CD4-positive, alpha-beta memory T cell (primary cell): ENCODE measurements at regions of chr17 and their contacts with region 1.

Region 1: GRCh38 chr17:82315703-82316358 is 1.6 kb downstream of the CD7 start:
- DNase-seq: peak; percentile 48 to 64 (median 51)
- H3K4me3 ChIP-seq: peak overlapping the region; percentile 51 to 88
- H3K4me3 Mint-ChIP-seq: peak overlapping the region in 7 of 8 donors; percentile 89 to 94 (median 93)
- H3K27ac ChIP-seq: peak overlapping the region; percentile 65
- H3K27ac Mint-ChIP-seq: peak overlapping the region in 6 of 7 donors; percentile 88 to 96 (median 93)
- H3K4me1 ChIP-seq: peaks cover 29% of the 10 kb centered on the region
- H3K4me1 Mint-ChIP-seq: peaks cover 7 to 26% (median 15%) of the 10 kb centered on the region in 4 donors
- H3K27me3 ChIP-seq: no peaks in the 10 kb centered on the region
- H3K27me3 Mint-ChIP-seq: no peaks in the 10 kb centered on the region

Region 2: GRCh38 chr17:82051776-82052637 is 263.8 kb before region 1 on chr17 and contains the starts of genes GPS1 and RFNG:
- CTCF ChIA-PET with region 1: no interaction called
- POLR2A ChIA-PET with region 1: no interaction called
- intact Hi-C with region 1: no loop called
- DNase-seq: peak; percentile 77 to 79 (median 78)
- H3K4me3 ChIP-seq: peak within 1 kb of the TSS; percentile 29 to 69
- H3K4me3 Mint-ChIP-seq: peak within 1 kb of the TSS; percentile 79 to 91 (median 84)
- H3K27ac ChIP-seq: peak within 1 kb of the TSS; percentile 55
- H3K27ac Mint-ChIP-seq: peak within 1 kb of the TSS; percentile 38 to 91 (median 87)
- H3K4me1 ChIP-seq: peaks cover 31% of the 10 kb centered on the region
- H3K4me1 Mint-ChIP-seq: peaks cover 3 to 22% (median 11%) of the 10 kb centered on the region in 4 donors
- H3K27me3 ChIP-seq: no peaks in the 10 kb centered on the region
- H3K27me3 Mint-ChIP-seq: no peaks in the 10 kb centered on the region
- total RNA-seq, gene GPS1: 85.1 to 89.0 TPM
- total RNA-seq, gene RFNG: 37.6 to 44.0 TPM

Region 3: GRCh38 chr17:82193520-82194220 is 122.2 kb before region 1 on chr17:
- CTCF ChIA-PET with region 1: no interaction called
- POLR2A ChIA-PET with region 1: no interaction called
- intact Hi-C with region 1: no loop called
- DNase-seq: no peak
- H3K4me3 ChIP-seq: no peak overlapping the region
- H3K4me3 Mint-ChIP-seq: no peak overlapping the region
- H3K27ac ChIP-seq: no peak overlapping the region
- H3K27ac Mint-ChIP-seq: peak overlapping the region in 1 of 7 donors; percentile 51
- H3K4me1 ChIP-seq: peaks cover 11% of the 10 kb centered on the region
- H3K4me1 Mint-ChIP-seq: peaks cover 8 to 15% (median 11%) of the 10 kb centered on the region in 4 donors
- H3K27me3 ChIP-seq: no peaks in the 10 kb centered on the region
- H3K27me3 Mint-ChIP-seq: no peaks in the 10 kb centered on the region

Region 4: DNA sequence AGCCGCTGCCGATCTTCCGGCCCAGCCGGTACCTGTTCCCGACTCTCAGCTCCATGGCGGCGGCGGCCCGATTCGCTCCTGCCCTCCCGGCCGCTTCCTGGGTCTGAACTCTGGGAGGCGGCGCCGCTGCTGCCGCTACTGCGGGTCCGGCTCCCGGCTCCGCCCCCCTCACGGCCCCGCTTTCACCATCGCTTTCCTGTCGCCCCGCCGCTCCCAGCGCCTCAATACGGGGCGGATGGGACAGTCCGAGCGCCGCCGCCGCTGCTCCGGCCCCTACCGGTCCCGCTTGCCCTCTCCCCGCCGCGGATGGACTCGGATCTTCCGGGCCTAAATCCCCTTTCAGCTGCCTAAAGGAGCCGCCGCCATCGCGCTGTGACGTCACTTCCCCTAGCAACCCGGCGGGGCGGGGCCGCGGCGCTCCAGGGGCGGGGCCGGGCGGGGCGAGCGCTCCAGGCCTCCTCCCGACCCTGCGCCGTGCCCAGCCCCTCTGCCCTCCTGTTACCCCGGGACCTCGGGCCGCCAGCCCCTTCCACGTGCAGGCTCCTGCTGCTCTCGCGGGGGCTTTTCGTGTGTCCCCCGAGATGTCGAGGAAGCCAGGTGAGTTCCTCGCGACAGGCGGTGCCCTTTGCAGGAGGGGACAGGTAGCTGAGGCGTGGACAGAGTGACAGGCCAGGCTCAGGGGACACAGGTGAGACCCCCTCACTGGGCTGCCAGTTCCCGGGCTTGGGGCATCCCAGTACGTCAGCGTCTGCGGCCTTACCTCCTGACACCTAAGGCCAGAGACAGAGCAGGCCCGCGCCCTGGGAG is 42.3 kb before region 1 on chr17 and contains the start of gene CSNK1D:
- CTCF ChIA-PET with region 1: no interaction called
- POLR2A ChIA-PET with region 1: interaction called, 15 read pairs
- intact Hi-C with region 1: loop called (anchors 1 kb)
- DNase-seq: peak; percentile 88 to 94 (median 90)
- H3K4me3 ChIP-seq: peak within 1 kb of the TSS; percentile 47 to 76
- H3K4me3 Mint-ChIP-seq: peak within 1 kb of the TSS; percentile 91 to 96 (median 94)
- H3K27ac ChIP-seq: peak within 1 kb of the TSS; percentile 80
- H3K27ac Mint-ChIP-seq: peak within 1 kb of the TSS; percentile 92 to 100 (median 98)
- H3K4me1 ChIP-seq: peaks cover 50% of the 10 kb centered on the region
- H3K4me1 Mint-ChIP-seq: peaks cover 31 to 53% (median 40%) of the 10 kb centered on the region in 4 donors
- H3K27me3 ChIP-seq: no peaks in the 10 kb centered on the region
- H3K27me3 Mint-ChIP-seq: no peaks in the 10 kb centered on the region
- total RNA-seq, gene CSNK1D: 182 TPM

Region 5: GRCh38 chr17:82302991-82303943 is 12.6 kb before region 1 on chr17:
- CTCF ChIA-PET with region 1: interaction called, 72 read pairs
- POLR2A ChIA-PET with region 1: interaction called, 172 read pairs
- intact Hi-C with region 1: loop called (anchors 1 kb)
- DNase-seq: peak; percentile 48 to 72 (median 62)
- H3K4me3 ChIP-seq: peak overlapping the region; percentile 42 to 54
- H3K4me3 Mint-ChIP-seq: peak overlapping the region; percentile 73 to 91 (median 84)
- H3K27ac ChIP-seq: peak overlapping the region; percentile 64
- H3K27ac Mint-ChIP-seq: peak overlapping the region; percentile 84 to 100 (median 92)
- H3K4me1 ChIP-seq: peaks cover 76% of the 10 kb centered on the region
- H3K4me1 Mint-ChIP-seq: peaks cover 23 to 82% (median 56%) of the 10 kb centered on the region in 4 donors
- H3K27me3 ChIP-seq: no peaks in the 10 kb centered on the region
- H3K27me3 Mint-ChIP-seq: no peaks in the 10 kb centered on the region

Region 6: DNA sequence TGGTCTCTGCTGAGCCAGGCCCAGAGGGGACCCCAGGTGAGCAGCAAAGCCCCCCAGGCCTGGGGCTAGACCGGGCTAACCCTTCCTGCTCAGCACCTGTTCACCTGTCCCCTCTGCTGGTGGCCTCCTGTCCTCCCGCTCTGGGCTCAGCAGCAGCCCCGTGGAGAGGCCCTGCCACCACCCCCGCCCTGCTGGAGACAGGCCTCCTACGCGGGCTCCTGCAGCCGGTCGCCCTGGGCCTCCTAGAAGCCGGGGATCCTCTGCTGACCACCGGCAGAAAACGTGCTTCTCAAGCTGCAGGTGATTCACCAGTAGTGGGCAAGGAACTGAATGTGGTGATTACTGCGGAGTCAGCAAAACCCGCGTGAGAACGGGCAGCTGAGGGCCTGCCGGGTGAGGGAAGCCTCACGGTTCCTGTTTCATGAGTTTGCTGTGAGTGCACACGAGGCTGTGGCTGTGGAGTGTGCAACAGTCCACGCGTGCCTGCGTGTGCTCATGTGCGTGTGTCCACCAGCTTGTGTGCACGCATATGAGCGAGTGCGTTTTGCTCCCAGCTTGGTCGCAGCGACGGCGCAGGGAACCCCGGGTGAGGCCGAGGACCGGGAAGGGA is 16.9 kb after region 1 on chr17:
- CTCF ChIA-PET with region 1: interaction called, 5 read pairs
- POLR2A ChIA-PET with region 1: interaction called, 21 read pairs
- intact Hi-C with region 1: no loop called
- DNase-seq: peak in 3 of 5 donors; percentile 20 to 41 (median 26)
- H3K4me3 ChIP-seq: peak overlapping the region in 1 of 2 donors; percentile 54
- H3K4me3 Mint-ChIP-seq: peak overlapping the region; percentile 86 to 91 (median 88)
- H3K27ac ChIP-seq: no peak overlapping the region
- H3K27ac Mint-ChIP-seq: peak overlapping the region in 6 of 7 donors; percentile 63 to 94 (median 74)
- H3K4me1 ChIP-seq: peaks cover 24% of the 10 kb centered on the region
- H3K4me1 Mint-ChIP-seq: peaks cover 13 to 26% (median 19%) of the 10 kb centered on the region in 4 donors
- H3K27me3 ChIP-seq: no peaks in the 10 kb centered on the region
- H3K27me3 Mint-ChIP-seq: peaks cover 0 to 2% of the 10 kb centered on the region in 2 donors

Region 7: GRCh38 chr17:82358465-82359350 is 42.9 kb after region 1 on chr17 and contains the start of gene TEX19:
- CTCF ChIA-PET with region 1: no interaction called
- POLR2A ChIA-PET with region 1: no interaction called
- intact Hi-C with region 1: no loop called
- DNase-seq: no peak
- H3K4me3 ChIP-seq: no peak within 1 kb of the TSS
- H3K4me3 Mint-ChIP-seq: peak within 1 kb of the TSS in 4 of 8 donors; percentile 3 to 60 (median 48)
- H3K27ac ChIP-seq: no peak within 1 kb of the TSS
- H3K27ac Mint-ChIP-seq: peak within 1 kb of the TSS in 3 of 7 donors; percentile 25 to 65 (median 62)
- H3K4me1 ChIP-seq: peaks cover 7% of the 10 kb centered on the region
- H3K4me1 Mint-ChIP-seq: peaks cover 0 to 8% (median 7%) of the 10 kb centered on the region in 4 donors
- H3K27me3 ChIP-seq: no peaks in the 10 kb centered on the region
- H3K27me3 Mint-ChIP-seq: peaks cover 6 to 14% of the 10 kb centered on the region in 2 donors
- total RNA-seq, gene TEX19: not detected